ENCODE measurements at regions of chr13 and their contacts with region 1.

Region 1: DNA sequence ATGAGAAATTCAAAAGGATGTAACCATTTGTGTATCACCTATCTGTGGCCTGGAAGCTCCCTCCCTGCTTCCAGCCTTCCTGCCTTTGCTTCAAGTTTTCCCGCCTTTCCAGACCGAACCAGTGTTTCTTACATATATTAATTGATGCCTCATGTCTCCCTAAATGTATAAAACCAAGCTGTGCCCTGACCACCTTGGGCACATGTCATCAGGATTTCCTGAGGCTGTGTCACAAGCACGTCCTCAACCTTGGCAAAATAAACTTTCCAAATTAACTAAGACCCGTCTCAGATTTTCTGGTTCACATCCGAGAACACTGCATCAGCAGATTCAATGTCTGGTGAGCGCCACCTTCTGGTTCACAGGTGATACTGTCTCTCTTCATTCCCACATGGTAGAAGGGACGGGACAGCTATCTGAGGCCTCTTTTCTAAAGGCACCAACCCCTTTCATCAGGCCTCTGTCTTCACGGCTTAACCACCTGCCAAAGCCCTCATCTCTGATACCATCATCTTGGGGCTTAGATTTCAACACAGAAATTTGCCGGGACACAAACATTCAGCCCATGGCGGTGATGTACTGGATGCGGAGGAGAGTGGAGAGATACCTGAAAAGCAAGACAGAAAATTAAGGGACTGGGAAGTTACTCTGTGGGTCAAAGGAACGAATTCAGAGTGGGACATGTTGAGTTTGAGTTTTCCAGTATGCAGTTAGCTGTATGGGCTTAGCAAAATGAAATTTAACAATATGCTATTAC is 58.7 kb upstream of the PABPC3 start:
- DNase-seq: peak; percentile 52
- ATAC-seq: peak; percentile 93
- H3K4me3 ChIP-seq: no peak overlapping the region
- H3K27ac ChIP-seq: no peak overlapping the region
- H3K4me1 ChIP-seq: no peaks in the 10 kb centered on the region
- H3K27me3 ChIP-seq: peaks cover 0 to 11% of the 10 kb centered on the region in 2 experiments; a peak in 3 of 5 replicates
- CTCF ChIP-seq: peak; percentile 78
- EP300 ChIP-seq: no peak
- POLR2A ChIP-seq: no peak
- RAD21 ChIP-seq: no peak

Region 2: DNA sequence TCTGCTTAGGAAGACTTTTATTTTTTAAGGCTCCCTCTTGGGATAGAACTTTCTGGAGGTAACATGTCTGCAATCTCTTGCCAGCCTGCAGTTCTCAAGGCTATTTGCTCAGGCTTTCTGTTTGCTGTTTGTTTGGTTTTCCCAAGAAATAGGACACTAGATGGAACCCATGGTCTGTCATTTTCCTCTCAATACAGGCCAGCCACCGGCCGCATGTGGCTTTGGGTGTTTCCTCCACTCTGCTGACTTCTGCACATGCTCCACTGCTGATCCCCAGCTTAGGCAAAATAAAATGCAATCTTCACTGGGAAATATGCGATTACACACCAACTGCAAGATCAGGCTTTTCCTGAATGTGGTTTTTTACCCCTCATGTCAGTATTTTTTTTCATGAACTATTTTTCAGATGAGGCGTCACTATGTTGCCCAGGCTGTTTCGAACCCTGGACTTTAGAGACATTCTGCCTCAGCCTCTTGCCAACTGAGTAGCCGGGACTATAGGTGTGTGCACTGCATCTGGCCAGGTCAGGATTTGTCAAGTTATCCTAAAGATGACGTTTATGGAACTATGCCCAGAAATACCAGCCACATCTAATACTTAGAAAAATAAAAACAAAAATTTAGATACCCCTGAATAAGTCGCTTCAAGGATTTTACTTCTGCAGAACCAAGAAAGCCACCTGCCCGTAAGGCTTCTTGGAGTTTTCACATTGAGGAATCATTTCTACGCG is 35.6 kb before region 1 on chr13:
- CTCF ChIA-PET with region 1: interaction called, 19 read pairs
- POLR2A ChIA-PET with region 1: no interaction called
- in situ Hi-C with region 1: loop called (anchors 5 kb)
- intact Hi-C with region 1: loop called (anchors 1 kb)
- DNase-seq: no peak
- ATAC-seq: peak; percentile 42; the same call in 2 of the 3 replicates
- H3K4me3 ChIP-seq: no peak overlapping the region
- H3K27ac ChIP-seq: no peak overlapping the region
- H3K4me1 ChIP-seq: peaks cover 27% of the 10 kb centered on the region
- H3K27me3 ChIP-seq: peaks cover 0 to 4% of the 10 kb centered on the region in 2 experiments; a peak in 1 of 5 replicates
- CTCF ChIP-seq: no peak
- EP300 ChIP-seq: no peak
- POLR2A ChIP-seq: no peak
- RAD21 ChIP-seq: no peak

Measured in HepG2 (cell line).